GM13976 (cell line): ENCODE measurements at regions of chr5 and their contacts with region 1.

Region 1: GRCh38 chr5:93582677-93583438 is at the start of gene NR2F1:
- DNase-seq: peak; percentile 47
- CTCF ChIP-seq: no peak

Region 2: DNA sequence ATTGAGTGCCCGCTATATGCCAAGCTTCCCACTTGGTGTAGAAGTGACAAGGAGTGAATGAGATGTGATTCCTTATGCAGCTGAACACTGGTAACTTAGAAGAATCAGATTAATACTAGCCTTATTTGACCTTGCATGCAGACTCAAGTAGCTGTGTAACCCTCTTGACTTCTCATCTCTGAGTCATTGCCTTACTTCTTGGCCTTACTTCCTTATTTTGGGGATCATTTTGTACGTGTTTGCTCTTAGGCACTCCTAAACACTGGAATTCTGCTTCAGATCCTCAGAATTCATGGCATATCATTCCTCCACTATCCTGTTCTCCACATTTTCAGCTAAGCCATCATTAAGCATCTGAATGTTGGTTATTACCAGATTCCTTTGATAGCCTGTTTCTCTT is 1250.8 kb before region 1 on chr5:
- in situ Hi-C with region 1: no loop called
- DNase-seq: no peak
- CTCF ChIP-seq: no peak

Region 3: DNA sequence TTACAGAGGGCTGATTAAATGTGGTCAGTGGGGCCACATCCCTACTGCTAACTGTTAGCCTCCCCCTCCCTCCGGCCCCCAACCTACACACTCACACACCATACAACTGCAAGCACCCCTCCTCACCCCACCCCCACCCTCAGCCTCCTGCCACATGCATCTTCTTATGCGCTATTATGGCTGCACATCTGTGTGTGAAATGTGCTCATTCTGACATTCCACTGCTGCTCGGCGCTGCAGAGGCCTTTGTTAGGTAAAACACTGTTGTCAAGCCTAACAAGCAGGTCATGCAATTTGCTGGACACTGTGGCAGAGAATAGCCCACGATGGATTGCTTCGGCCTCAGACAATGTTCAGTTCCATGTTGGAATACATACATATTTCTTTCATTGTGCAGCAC is 175.4 kb before region 1 on chr5:
- in situ Hi-C with region 1: no loop called
- DNase-seq: no peak
- CTCF ChIP-seq: no peak

Region 4: GRCh38 chr5:93915142-93915553 is 332.3 kb after region 1 on chr5:
- in situ Hi-C with region 1: loop called (anchors 25 kb)
- DNase-seq: peak; percentile 6
- CTCF ChIP-seq: no peak